GM10248 (cell line): ENCODE measurements at regions of chr1 and their contacts with region 1.

Region 1: GRCh38 chr1:207863893-207864535 is 46.9 kb downstream of the CD34 start:
- DNase-seq: peak; percentile 63
- CTCF ChIP-seq: no peak

Region 2: GRCh38 chr1:207876131-207876530 is 12.1 kb after region 1 on chr1:
- CTCF ChIA-PET with region 1: interaction called, 319 read pairs
- POLR2A ChIA-PET with region 1: interaction called, 3 read pairs
- DNase-seq: no peak
- CTCF ChIP-seq: peak; percentile 38

Region 3: GRCh38 chr1:208007938-208008342 is 143.9 kb after region 1 on chr1:
- CTCF ChIA-PET with region 1: no interaction called
- POLR2A ChIA-PET with region 1: interaction called, 10 read pairs
- DNase-seq: no peak
- CTCF ChIP-seq: no peak